Panc1 (cell line): ENCODE measurements at regions of chr15 and their contacts with region 1.

Region 1: DNA sequence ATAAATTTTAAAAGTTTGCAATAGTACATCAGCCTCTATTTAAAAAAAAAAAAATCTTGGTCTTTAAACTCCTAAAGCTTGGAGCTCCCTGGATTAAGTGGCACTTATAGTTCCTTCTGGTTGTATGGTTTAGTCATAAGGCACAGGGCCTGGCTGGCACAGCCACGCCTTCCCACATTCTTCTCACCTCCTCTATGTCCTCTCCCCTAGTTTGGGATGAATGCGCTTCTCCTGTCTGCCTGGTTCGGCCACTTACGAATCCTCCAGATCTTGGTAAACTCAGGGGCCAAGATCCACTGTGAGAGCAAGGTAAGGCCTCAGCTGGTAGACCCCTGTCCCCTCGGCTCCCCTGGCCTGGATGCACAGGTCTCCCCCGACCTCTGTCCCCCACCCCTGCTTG is 10.0 kb downstream of the ANKDD1A start:
- DNase-seq: no peak
- ATAC-seq: no peak
- H3K4me3 ChIP-seq: no peak overlapping the region
- H3K27ac ChIP-seq: no peak overlapping the region
- H3K4me1 ChIP-seq: no peaks in the 10 kb centered on the region
- H3K27me3 ChIP-seq: no peaks in the 10 kb centered on the region
- CTCF ChIP-seq: no peak

Region 2: GRCh38 chr15:65695081-65695480 is 773.4 kb after region 1 on chr15:
- CTCF ChIA-PET with region 1: no interaction called
- POLR2A ChIA-PET with region 1: interaction called, 13 read pairs
- in situ Hi-C with region 1: no loop called
- intact Hi-C with region 1: no loop called
- DNase-seq: no peak
- ATAC-seq: no peak
- H3K4me3 ChIP-seq: no peak overlapping the region
- H3K27ac ChIP-seq: no peak overlapping the region
- H3K4me1 ChIP-seq: no peaks in the 10 kb centered on the region
- H3K27me3 ChIP-seq: no peaks in the 10 kb centered on the region
- CTCF ChIP-seq: no peak